Natural killer cell (primary cell): ENCODE measurements at regions of chr1 and their contacts with region 1.

Region 1: GRCh38 chr1:29033829-29034466 is 89.8 kb downstream of the TMEM200B start:
- DNase-seq: peak in 1 of 2 donors; percentile 65
- ATAC-seq: peak; percentile 69 to 85 (median 69)
- H3K4me3 ChIP-seq: no peak overlapping the region
- H3K4me3 Mint-ChIP-seq: no peak overlapping the region
- H3K27ac ChIP-seq: no peak overlapping the region
- H3K27ac Mint-ChIP-seq: peak overlapping the region; percentile 60 to 77
- H3K4me1 ChIP-seq: no peaks in the 10 kb centered on the region
- H3K4me1 Mint-ChIP-seq: peaks cover 4 to 7% of the 10 kb centered on the region in 2 donors
- H3K27me3 ChIP-seq: no peaks in the 10 kb centered on the region
- H3K27me3 Mint-ChIP-seq: no peaks in the 10 kb centered on the region
- CTCF ChIP-seq: peak; percentile 78

Region 2: GRCh38 chr1:28789412-28789811 is 244.5 kb before region 1 on chr1:
- intact Hi-C with region 1: loop called (anchors 5 kb)
- DNase-seq: no peak
- ATAC-seq: no peak
- H3K4me3 ChIP-seq: no peak overlapping the region
- H3K4me3 Mint-ChIP-seq: no peak overlapping the region
- H3K27ac ChIP-seq: no peak overlapping the region
- H3K27ac Mint-ChIP-seq: no peak overlapping the region
- H3K4me1 ChIP-seq: peaks cover 6% of the 10 kb centered on the region
- H3K4me1 Mint-ChIP-seq: peaks cover 10 to 11% of the 10 kb centered on the region in 2 donors
- H3K27me3 ChIP-seq: no peaks in the 10 kb centered on the region
- H3K27me3 Mint-ChIP-seq: peaks cover 0 to 4% of the 10 kb centered on the region in 2 donors
- CTCF ChIP-seq: no peak

Region 3: GRCh38 chr1:28801461-28801860 is 232.5 kb before region 1 on chr1:
- intact Hi-C with region 1: no loop called
- DNase-seq: no peak
- ATAC-seq: no peak
- H3K4me3 ChIP-seq: no peak overlapping the region
- H3K4me3 Mint-ChIP-seq: no peak overlapping the region
- H3K27ac ChIP-seq: no peak overlapping the region
- H3K27ac Mint-ChIP-seq: no peak overlapping the region
- H3K4me1 ChIP-seq: no peaks in the 10 kb centered on the region
- H3K4me1 Mint-ChIP-seq: no peaks in the 10 kb centered on the region
- H3K27me3 ChIP-seq: no peaks in the 10 kb centered on the region
- H3K27me3 Mint-ChIP-seq: peaks cover 2 to 10% of the 10 kb centered on the region in 2 donors
- CTCF ChIP-seq: no peak